Mucosa of descending colon (tissue), 3 donors: ENCODE measurements at regions of chr19 and their contacts with region 1.

Region 1: GRCh38 chr19:5891938-5892771 is 11.4 kb downstream of the NDUFA11 start:
- DNase-seq: peak in 2 of 3 donors; percentile 66 to 70
- ATAC-seq: peak; percentile 80
- H3K4me3 ChIP-seq: no peak overlapping the region
- H3K4me1 ChIP-seq: no peaks in the 10 kb centered on the region
- CTCF ChIP-seq: peak; percentile 42

Region 2: DNA sequence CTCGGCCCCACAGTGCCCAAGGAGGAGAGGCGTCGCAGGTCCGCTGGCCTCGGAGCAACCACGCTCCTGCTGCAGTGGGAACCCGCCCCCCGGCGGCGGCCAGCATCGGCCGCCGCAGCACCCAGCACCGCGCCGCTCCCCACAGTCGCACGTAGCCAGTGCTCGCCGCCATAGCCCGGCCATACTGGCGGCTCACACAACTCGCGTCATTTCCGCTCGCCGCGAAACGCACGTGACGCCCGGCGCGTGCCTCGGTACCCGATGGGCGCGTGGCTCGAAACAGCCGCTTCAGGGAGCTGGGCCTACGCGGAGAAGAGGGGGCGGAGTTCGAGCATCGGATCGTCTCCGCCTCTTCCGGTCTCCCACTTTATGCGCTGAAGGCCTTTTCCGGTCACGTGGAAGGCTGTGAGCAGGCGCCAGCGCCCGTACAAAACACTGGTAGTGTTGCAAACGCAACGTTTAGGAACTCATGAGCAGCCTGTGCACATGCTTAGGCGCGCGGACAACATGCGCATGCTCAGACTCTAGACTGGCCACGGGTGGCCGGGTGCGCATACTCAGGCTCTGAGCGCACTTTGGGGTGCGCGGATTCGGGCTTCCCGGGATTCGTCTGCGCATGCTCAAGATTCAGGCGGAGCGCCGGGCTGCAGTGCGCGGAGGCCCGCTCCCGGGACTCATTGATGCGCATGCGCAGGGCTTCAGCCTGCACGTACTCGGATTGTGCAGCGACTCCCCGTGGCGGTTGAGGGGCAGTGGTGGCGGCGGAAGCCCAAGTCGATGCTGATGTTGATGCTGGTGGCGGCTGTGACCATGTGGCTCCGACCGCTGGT is 172.0 kb before region 1 on chr19 and contains the starts of genes CATSPERD and LONP1:
- intact Hi-C with region 1: no loop called
- DNase-seq: peak; percentile 99
- ATAC-seq: peak; percentile 98
- H3K4me3 ChIP-seq: peak within 1 kb of the TSS; percentile 95
- H3K4me1 ChIP-seq: peaks cover 12% of the 10 kb centered on the region
- CTCF ChIP-seq: peak; percentile 90
- total RNA-seq, gene CATSPERD: not detected
- total RNA-seq, gene LONP1: 55.9 to 63.0 (median 55.9) TPM

Region 3: DNA sequence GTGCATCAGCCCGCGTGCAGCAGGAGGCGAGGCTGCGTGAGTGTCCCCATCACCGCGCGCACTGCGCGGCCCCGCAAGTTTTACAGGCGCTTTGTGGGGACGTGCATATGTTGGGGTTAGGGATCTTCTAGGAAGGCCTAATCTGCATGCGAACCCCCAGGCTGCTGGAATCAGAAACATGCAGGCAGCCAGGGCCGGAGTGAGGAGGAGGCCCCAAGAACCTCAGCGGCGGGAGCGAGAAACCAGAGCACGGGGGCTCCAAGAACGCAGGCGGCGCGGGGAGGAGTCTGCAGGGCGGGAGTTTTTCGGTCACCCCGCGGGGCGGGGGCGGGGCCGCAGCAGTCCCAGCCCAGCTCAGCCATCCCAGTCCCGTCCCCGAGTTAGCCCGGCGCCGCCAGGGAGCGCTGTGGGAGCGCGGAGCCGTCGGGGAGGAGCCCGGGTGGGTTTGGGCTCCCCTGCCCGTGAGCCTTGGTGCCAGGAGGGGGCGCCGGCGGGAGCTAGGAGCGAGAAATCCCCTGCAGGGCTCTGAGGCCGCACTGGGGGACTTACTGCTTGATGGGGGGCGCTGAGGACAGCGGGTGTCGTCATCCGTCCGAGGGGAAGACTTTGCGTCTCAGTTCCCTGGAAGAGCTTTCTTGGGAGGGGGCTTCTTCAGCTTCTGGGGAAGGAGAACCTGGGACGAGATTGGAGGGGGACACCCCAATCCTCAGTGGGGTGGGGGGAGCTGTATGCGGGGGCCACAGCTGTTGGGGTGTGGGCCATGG is 88.2 kb before region 1 on chr19:
- intact Hi-C with region 1: loop called in 1 of 2 experiments (anchors 5 kb)
- DNase-seq: peak; percentile 90 to 96 (median 91)
- ATAC-seq: peak; percentile 91
- H3K4me3 ChIP-seq: no peak overlapping the region
- H3K4me1 ChIP-seq: peaks cover 23% of the 10 kb centered on the region
- CTCF ChIP-seq: peak; percentile 92

Region 4: GRCh38 chr19:5814852-5815246 is 77.3 kb before region 1 on chr19:
- intact Hi-C with region 1: loop called in 1 of 2 experiments (anchors 10 kb)
- DNase-seq: no peak
- ATAC-seq: peak; percentile 44
- H3K4me3 ChIP-seq: no peak overlapping the region
- H3K4me1 ChIP-seq: peaks cover 4% of the 10 kb centered on the region
- CTCF ChIP-seq: no peak

Region 5: DNA sequence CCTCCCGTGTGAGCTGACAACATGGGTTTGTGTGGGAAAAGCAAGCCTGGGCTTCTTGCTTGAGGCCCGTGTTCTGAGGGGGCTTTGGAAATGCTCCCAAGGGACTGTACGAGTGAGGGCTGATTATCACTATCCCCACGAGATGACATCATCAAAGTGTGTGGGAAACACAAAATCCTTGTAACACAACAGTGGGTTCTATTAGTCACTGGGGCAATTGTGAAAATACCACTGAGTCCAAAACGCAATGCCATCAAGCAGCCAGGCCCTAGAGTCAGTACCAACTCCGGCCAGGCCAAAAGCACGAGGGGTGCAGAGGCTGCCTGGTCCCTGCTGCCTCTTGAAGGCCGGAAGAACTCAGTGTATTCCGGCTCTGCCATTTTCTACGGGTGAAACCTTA is 51.5 kb after region 1 on chr19:
- intact Hi-C with region 1: no loop called
- DNase-seq: no peak
- ATAC-seq: no peak
- H3K4me3 ChIP-seq: no peak overlapping the region
- H3K4me1 ChIP-seq: peaks cover 7% of the 10 kb centered on the region
- CTCF ChIP-seq: no peak

Region 6: GRCh38 chr19:6056801-6057650 is 164.9 kb after region 1 on chr19:
- intact Hi-C with region 1: no loop called
- DNase-seq: peak; percentile 71 to 76 (median 76)
- ATAC-seq: peak; percentile 82
- H3K4me3 ChIP-seq: no peak overlapping the region
- H3K4me1 ChIP-seq: peaks cover 37% of the 10 kb centered on the region
- CTCF ChIP-seq: no peak